ENCODE measurements at regions of chrX and their contacts with region 1.

Region 1: DNA sequence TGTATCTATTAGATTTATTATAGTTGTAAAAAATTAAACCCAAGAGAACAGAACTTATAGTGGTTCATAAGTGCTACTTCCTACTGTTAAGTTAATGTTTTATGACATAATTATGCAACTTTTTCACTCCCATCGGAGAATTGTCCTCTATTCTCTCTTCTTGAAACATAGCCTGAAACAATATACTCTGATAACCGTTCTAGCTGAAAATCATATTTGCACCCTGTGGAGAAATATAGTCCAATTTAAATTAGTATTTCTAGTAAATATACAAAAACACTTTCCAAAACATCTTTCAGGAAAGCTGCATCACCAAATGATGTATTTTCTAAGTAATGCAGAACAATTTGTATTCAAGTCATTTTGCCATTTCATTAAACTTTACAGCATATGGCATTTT is 586.4 kb downstream of the PRR32 start:
- DNase-seq: no peak
- H3K4me3 ChIP-seq: no peak overlapping the region
- H3K27ac ChIP-seq: no peak overlapping the region
- H3K4me1 ChIP-seq: no peaks in the 10 kb centered on the region
- H3K27me3 ChIP-seq: no peaks in the 10 kb centered on the region
- CTCF ChIP-seq: no peak

Region 2: DNA sequence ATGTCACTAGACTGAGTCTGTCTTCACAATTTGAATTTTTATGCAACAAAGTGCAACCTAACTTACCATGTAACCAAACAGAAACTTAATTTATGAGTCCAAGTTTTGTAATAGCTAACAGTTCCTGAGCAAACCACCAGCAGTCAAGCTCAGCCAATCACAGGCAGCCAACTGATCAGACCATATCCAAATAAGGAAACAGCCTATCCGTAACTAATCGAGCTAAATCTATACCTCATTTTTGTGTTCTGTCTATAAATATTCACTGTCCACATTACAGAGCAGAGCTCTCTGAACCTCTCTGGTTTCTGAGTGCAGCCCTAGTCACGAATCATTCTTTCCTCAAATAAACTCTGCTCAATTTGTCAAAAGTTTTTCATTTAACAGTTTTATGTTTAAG is 218.9 kb before region 1 on chrX:
- CTCF ChIA-PET with region 1: no interaction called
- POLR2A ChIA-PET with region 1: no interaction called
- intact Hi-C with region 1: loop called (anchors 10 kb)
- DNase-seq: peak; percentile 0
- H3K4me3 ChIP-seq: no peak overlapping the region
- H3K27ac ChIP-seq: no peak overlapping the region
- H3K4me1 ChIP-seq: no peaks in the 10 kb centered on the region
- H3K27me3 ChIP-seq: no peaks in the 10 kb centered on the region
- CTCF ChIP-seq: no peak

Region 3: DNA sequence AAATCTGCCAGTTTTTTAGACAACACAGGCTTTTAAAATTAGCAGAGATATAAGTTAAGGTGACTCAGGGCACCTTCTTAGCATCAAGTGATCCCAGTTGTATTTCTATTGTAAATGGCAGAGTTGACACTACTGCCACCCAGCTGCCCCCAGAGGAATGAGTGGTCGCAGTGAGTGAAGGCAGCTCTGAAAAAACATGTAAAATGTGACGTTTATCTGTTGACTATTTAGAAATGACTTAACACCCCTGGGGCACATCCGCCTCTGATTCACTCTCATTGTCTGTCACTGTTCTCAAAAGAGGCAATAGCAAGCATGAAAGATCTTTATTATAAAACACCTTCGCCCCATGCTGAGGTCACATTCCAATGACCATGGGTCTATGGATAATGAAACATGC is 53.9 kb after region 1 on chrX:
- CTCF ChIA-PET with region 1: no interaction called
- POLR2A ChIA-PET with region 1: no interaction called
- intact Hi-C with region 1: no loop called
- DNase-seq: peak; percentile 3
- H3K4me3 ChIP-seq: no peak overlapping the region
- H3K27ac ChIP-seq: no peak overlapping the region
- H3K4me1 ChIP-seq: no peaks in the 10 kb centered on the region
- H3K27me3 ChIP-seq: no peaks in the 10 kb centered on the region
- CTCF ChIP-seq: no peak

Region 4: DNA sequence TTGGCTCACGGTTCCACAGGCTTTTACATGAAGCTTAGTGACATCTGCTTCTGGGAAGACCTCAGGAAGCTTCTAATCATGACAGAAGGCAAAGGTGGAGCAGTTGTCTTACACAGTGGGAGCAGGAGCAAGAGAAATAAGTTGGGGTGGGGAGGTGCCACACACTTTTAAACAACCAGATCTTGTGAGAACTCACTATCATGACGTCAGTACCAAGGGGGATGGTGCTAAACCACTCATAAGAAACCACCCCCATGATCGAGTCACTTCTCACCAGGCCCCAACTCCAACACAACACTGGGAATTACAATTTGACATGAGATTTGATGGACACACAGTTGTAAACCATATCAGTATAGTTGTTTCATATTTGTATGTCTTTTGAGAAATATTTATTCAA is 133.5 kb after region 1 on chrX:
- CTCF ChIA-PET with region 1: no interaction called
- POLR2A ChIA-PET with region 1: no interaction called
- intact Hi-C with region 1: no loop called
- DNase-seq: no peak
- H3K4me3 ChIP-seq: no peak overlapping the region
- H3K27ac ChIP-seq: no peak overlapping the region
- H3K4me1 ChIP-seq: no peaks in the 10 kb centered on the region
- H3K27me3 ChIP-seq: no peaks in the 10 kb centered on the region
- CTCF ChIP-seq: no peak

Measured in A673 (cell line).